Calu3 (cell line): ENCODE measurements at regions of chr4 and their contacts with region 1.

Region 1: GRCh38 chr4:107913281-107913899 is 18.0 kb upstream of the CYP2U1 start:
- DNase-seq: peak; percentile 51
- H3K4me3 Mint-ChIP-seq: no peak overlapping the region
- H3K27ac Mint-ChIP-seq: no peak overlapping the region
- H3K4me1 Mint-ChIP-seq: no peaks in the 10 kb centered on the region
- H3K27me3 Mint-ChIP-seq: no peaks in the 10 kb centered on the region
- CTCF ChIP-seq: peak; percentile 32

Region 2: GRCh38 chr4:107757864-107758476 is 155.4 kb before region 1 on chr4:
- CTCF ChIA-PET with region 1: no interaction called
- intact Hi-C with region 1: loop called (anchors 1 kb)
- DNase-seq: no peak
- H3K4me3 Mint-ChIP-seq: no peak overlapping the region
- H3K27ac Mint-ChIP-seq: no peak overlapping the region
- H3K4me1 Mint-ChIP-seq: no peaks in the 10 kb centered on the region
- H3K27me3 Mint-ChIP-seq: no peaks in the 10 kb centered on the region
- CTCF ChIP-seq: no peak

Region 3: DNA sequence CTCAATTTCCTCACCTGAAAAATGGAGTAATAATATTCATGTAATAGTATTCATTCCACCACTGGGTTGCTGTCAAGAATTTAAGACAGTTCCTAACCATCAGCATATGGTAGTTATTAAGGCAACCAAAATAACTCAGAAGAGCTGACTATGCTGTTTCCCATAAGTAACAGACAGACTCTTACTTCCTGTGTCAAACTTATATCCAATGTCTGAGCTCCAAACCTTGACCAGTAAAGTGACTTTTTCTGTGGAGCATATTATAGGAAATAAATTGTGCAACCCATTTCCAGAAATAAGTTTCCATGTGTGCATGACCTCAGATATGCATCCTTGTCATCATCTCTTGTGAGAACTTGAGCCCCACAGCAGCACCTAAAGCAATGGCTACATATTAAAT is 155.1 kb after region 1 on chr4:
- CTCF ChIA-PET with region 1: no interaction called
- intact Hi-C with region 1: no loop called
- DNase-seq: no peak
- H3K4me3 Mint-ChIP-seq: no peak overlapping the region
- H3K27ac Mint-ChIP-seq: no peak overlapping the region
- H3K4me1 Mint-ChIP-seq: peaks cover 10% of the 10 kb centered on the region
- H3K27me3 Mint-ChIP-seq: no peaks in the 10 kb centered on the region
- CTCF ChIP-seq: no peak